ENCODE measurements at regions of chr1 and their contacts with region 1.

Region 1: GRCh38 chr1:168097921-168098528 is 38.7 kb downstream of the GPR161 start:
- DNase-seq: no peak
- H3K4me3 ChIP-seq: no peak overlapping the region
- H3K27ac ChIP-seq: no peak overlapping the region
- H3K4me1 ChIP-seq: peaks cover 0 to 16% (median 0%) of the 10 kb centered on the region in 3 donors
- H3K27me3 ChIP-seq: no peaks in the 10 kb centered on the region
- CTCF ChIP-seq: no peak
- POLR2A ChIP-seq: no peak

Region 2: DNA sequence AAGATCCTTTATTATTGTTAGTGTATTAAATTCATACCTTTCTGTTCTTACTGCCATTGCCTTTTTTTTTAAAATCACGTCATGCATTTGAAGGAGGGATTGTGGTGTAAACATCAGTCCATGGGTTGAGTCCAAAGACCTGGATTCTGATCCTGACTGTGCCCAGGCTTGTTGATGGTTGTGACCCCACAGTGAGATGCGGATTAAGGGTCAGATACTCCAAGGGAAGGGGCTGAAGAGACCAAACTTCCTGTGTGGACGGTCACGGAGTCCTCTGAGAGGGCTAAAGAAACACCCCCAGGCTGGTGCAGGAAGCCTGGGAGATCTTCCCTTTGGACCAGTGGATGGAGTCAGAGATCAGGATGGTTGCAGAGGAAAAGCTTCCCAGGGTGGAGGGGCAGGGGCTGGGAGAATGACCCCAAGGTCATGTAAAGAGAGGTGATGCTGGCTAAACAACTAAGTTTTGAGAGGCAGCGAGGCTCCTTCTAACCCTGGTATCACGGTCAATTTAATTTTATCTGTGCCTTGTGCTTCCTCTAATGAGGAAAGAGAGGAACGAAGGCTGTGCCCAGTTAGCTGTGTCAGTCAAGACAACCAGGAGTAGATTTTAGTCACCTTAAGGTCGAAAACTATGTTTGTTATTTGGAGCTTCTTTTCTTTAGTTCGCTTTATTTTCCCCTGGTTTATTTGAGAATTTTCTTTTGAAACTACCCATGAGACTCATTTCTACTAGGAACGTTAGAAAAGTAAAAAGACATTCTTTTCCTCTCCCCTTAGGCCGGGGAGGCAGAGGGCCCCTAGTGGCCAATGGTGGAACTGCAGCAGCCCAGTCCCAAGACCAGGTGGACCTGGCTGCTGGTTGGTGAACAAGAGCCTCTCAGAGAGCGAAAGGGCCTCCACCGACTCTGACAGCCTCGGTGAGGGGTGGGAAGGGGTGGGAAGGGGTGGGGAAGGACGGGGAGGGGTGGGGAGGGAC is 47.4 kb after region 1 on chr1:
- intact Hi-C with region 1: loop called (anchors 5 kb)
- DNase-seq: no peak
- H3K4me3 ChIP-seq: no peak overlapping the region
- H3K27ac ChIP-seq: no peak overlapping the region
- H3K4me1 ChIP-seq: peaks cover 0 to 5% (median 0%) of the 10 kb centered on the region in 3 donors
- H3K27me3 ChIP-seq: no peaks in the 10 kb centered on the region
- CTCF ChIP-seq: peak; percentile 78 to 99 (median 97)
- POLR2A ChIP-seq: no peak

Region 3: DNA sequence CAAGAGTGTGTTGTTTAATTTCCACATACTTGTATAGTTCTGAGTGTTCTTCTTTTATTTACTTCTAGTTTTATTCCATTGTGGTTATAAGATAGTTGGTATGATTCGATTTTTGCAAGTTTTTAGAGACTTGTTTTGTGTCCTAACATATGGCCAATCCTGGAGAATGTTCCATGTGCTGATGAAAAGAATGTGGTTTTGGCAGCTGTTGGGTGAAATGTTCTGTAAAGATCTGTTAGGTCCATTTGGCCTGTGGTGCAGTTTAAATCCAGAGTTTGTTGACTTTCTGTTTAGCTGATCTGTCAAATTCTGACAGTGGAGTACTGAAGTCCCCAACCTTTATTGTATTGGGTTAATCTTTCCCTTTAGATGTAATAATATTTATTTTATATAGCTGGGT is 61.2 kb after region 1 on chr1:
- intact Hi-C with region 1: no loop called
- DNase-seq: no peak
- H3K4me3 ChIP-seq: no peak overlapping the region
- H3K27ac ChIP-seq: no peak overlapping the region
- H3K4me1 ChIP-seq: no peaks in the 10 kb centered on the region
- H3K27me3 ChIP-seq: no peaks in the 10 kb centered on the region
- CTCF ChIP-seq: no peak
- POLR2A ChIP-seq: no peak

Region 4: GRCh38 chr1:168287237-168287664 is 189.2 kb after region 1 on chr1:
- intact Hi-C with region 1: no loop called
- DNase-seq: no peak
- H3K4me3 ChIP-seq: no peak overlapping the region
- H3K27ac ChIP-seq: no peak overlapping the region
- H3K4me1 ChIP-seq: peaks cover 0 to 15% (median 0%) of the 10 kb centered on the region in 3 donors
- H3K27me3 ChIP-seq: no peaks in the 10 kb centered on the region
- CTCF ChIP-seq: no peak
- POLR2A ChIP-seq: no peak

Measured in esophagus squamous epithelium (tissue), 5 donors.